ENCODE measurements at regions of chr5 and their contacts with region 1.

Region 1: GRCh38 chr5:142922223-142922952 is 152.2 kb downstream of the ARHGAP26 start:
- H3K4me3 ChIP-seq: no peak overlapping the region
- H3K27ac ChIP-seq: no peak overlapping the region
- H3K4me1 ChIP-seq: peaks cover 10% of the 10 kb centered on the region
- CTCF ChIP-seq: 0 out of 2 replicates have a peak, but pooled peaks have one; percentile 15

Region 2: DNA sequence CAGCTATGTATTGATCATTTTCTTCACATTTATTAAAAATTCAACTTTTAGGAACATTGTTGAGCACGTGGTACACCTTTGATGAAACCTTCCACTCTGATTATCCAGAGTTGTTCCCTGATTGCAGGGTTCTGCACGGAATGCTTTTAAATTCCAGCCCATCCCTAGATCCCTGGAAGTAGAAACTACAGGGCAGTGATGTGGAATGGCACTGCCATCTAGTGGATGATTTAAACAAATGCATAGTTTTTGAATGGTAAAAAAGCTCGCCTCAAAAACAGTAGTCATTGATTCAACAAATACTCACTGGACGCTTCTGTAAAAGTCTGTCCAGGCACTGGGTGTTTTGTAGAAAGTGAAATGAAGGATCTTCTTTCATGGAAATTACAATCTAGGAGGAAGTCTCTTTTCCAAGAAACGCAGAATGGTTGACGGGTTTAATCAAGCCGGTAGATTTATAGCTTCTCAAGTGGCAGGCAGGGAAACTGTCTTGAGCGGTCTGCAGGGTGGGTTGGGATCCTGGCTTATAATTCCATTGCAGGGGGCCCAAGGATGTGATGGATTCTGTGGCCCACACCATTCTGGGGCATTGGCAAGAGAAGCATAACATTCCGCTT is 33.8 kb before region 1 on chr5:
- CTCF ChIA-PET with region 1: interaction called, 49 read pairs
- POLR2A ChIA-PET with region 1: no interaction called
- H3K4me3 ChIP-seq: no peak overlapping the region
- H3K27ac ChIP-seq: no peak overlapping the region
- H3K4me1 ChIP-seq: no peaks in the 10 kb centered on the region
- CTCF ChIP-seq: peak; percentile 26; the same call in 1 of the 2 replicates

Region 3: DNA sequence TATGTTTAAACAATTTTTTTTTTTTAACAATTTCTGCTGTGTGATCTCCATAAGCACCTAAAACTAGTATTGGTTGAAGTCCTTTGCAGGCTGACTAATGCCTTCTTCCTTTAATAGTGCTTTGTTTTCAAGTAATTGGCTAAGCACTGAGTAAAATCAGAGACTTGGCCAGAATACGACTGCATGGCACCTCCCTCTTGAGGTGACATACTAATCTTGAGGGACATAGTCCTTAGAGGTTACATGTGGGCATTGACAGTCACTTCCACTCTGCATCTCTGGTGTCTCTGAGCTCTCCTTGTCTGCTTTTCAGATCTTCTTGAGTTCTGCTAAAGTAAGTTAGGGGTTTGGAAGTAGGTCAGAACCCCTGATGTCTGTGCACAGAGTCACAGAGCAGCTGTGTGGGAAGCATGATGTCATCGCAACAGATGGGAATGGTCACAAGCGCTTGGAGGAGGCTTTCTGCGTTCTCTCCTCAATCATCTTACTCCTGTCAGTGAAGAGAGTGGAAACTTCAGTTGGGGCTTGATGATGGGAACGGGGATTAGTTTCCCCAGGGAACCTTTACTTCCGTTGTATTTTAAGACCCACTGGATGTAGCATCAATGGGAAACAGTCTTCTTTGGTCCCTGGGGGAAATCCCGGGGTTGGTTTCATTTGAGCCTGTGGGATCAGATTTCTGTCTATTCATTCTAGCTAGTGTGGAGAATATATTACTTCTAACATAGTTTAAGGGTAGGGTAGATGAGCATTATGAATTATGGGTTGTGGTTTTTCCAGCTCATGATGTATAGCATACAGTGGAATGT is 15.3 kb before region 1 on chr5:
- CTCF ChIA-PET with region 1: interaction called, 13 read pairs
- POLR2A ChIA-PET with region 1: no interaction called
- H3K4me3 ChIP-seq: no peak overlapping the region
- H3K27ac ChIP-seq: no peak overlapping the region
- H3K4me1 ChIP-seq: no peaks in the 10 kb centered on the region
- CTCF ChIP-seq: no peak

Region 4: DNA sequence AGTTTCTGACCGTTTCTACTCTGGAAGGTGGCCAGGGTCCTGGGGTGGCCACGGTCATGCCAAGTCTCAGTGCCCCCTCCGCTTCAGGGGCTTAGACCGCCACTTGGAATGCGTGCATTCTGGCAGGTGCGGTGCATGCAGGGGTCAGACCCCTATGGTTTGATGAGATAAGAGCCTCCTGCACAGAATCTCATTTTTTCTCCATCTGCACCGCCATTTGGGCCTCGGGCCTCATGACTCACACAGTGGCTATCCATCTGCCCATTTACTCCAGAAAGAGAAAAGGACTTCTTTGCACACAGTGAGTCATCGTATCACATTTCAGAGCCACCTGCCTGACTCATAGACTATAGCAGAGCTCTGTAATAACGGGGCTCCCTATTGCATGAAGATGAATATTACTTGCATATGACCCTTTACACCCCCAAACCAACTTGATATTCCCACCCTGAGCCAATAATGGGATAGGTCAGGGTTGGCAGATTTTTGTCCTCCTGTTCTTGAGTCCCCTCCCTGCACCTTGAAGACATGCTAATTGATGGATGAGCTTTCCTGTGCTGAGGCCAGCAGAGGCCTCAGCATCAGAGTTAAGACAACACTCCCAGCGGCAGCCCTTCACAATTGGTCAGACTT is 323.7 kb after region 1 on chr5:
- CTCF ChIA-PET with region 1: no interaction called
- POLR2A ChIA-PET with region 1: no interaction called
- H3K4me3 ChIP-seq: peak overlapping the region; percentile 15
- H3K27ac ChIP-seq: no peak overlapping the region; the same call in 1 of the 2 replicates
- H3K4me1 ChIP-seq: peaks cover 4% of the 10 kb centered on the region; the same call in 1 of the 2 replicates
- CTCF ChIP-seq: no peak